ENCODE measurements at regions of chr1 and their contacts with region 1.

Region 1: DNA sequence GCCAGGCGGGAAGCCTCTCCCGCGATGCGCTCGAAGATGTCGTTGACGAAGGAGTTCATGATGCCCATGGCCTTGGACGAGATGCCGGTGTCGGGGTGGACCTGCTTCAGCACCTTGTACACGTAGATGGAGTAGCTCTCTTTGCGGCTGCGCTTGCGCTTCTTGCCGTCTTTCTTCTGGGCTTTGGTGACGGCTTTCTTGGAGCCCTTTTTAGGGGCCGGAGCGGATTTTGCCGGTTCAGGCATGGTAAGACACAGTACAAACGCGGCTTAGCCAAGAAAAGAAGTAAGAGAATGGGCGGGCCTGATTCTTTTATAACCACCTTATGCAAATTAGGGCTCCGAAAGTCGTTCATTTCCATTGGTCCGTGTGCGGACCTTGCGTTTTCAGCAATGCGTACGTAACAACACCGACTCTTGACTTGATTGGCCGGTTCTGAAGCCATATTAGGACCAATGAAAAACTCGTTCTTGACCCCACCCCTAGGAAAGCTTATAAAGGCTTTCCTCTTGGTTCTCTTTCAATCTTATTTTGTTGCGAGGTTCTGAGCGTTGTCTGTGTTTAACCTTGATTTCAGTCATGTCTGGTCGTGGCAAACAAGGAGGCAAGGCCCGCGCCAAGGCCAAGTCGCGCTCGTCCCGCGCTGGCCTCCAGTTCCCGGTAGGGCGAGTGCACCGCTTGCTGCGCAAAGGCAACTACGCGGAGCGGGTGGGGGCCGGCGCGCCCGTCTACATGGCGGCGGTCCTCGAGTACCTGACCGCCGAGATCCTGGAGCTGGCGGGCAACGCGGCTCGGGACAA is 12.8 kb upstream of the BOLA1 start:
- DNase-seq: peak; percentile 83 to 98 (median 89)
- ATAC-seq: peak; percentile 80
- H3K4me3 ChIP-seq: peak overlapping the region; percentile 64
- H3K27ac ChIP-seq: peak overlapping the region; percentile 98
- H3K4me1 ChIP-seq: peaks cover 8 to 27% of the 10 kb centered on the region in 2 experiments
- H3K27me3 ChIP-seq: no peaks in the 10 kb centered on the region
- CTCF ChIP-seq: no peak
- EP300 ChIP-seq: peak; percentile 27; the same call in 1 of the 2 replicates
- POLR2A ChIP-seq: peak; percentile 100
- RAD21 ChIP-seq: peak in 1 of 2 experiments; percentile 25; a peak in 1 of 4 replicates

Region 2: DNA sequence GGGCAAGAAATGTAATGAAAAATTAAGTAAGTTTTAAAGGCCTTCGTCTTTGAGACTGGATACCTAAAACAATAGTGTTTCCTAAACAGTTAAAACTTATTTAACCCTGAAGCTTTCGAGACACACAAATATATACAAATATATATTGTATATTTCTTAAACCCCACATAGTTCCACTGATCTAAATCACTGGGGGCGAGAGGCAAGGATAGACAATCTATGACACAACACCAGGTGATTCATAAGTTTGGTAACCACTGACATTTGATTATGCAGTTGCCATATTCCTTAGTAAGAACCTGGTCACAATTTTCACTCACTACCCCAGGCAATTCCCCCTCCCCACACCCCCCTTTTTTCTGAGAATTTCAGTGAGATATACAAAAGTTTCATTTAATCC is 42.5 kb before region 1 on chr1:
- CTCF ChIA-PET with region 1: no interaction called
- POLR2A ChIA-PET with region 1: interaction called, 39 read pairs
- in situ Hi-C with region 1: loop called (anchors 5 kb)
- intact Hi-C with region 1: no loop called
- DNase-seq: peak in 3 of 4 experiments; percentile 10 to 59 (median 11)
- ATAC-seq: no peak
- H3K4me3 ChIP-seq: peak overlapping the region; percentile 60
- H3K27ac ChIP-seq: peak overlapping the region; percentile 81
- H3K4me1 ChIP-seq: peaks cover 5 to 29% of the 10 kb centered on the region in 2 experiments; a peak in 4 of 5 replicates
- H3K27me3 ChIP-seq: no peaks in the 10 kb centered on the region
- CTCF ChIP-seq: no peak
- EP300 ChIP-seq: no peak
- POLR2A ChIP-seq: no peak
- RAD21 ChIP-seq: no peak

Region 3: DNA sequence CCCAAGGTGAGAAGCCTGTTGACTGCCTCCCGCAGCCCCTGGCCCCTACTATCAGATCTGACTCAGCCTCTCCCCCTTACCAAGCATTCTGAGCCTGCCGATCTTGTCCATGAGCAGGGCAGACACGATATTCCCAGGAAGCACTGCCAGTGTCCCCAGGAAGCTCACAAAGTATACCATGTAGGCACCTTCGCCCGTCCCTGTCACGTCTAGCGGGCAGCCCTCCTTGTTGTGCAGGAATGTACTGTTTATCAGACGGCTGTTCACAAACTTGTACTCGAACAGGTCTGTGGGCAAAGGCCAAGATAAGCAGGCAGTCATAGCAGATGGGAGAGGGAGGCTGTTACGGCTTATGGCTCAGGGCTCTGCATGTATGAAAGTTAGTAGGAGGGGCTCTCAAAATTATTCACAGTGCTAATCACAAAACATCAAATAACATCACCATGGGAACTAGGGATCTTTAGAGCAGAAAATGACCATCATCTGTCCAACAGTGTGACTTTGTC is 20.0 kb after region 1 on chr1:
- CTCF ChIA-PET with region 1: no interaction called
- POLR2A ChIA-PET with region 1: interaction called, 71 read pairs
- in situ Hi-C with region 1: no loop called
- intact Hi-C with region 1: no loop called
- DNase-seq: peak; percentile 65 to 79 (median 76)
- ATAC-seq: peak; percentile 82
- H3K4me3 ChIP-seq: peak overlapping the region; percentile 5; the same call in 1 of the 2 replicates
- H3K27ac ChIP-seq: peak overlapping the region; percentile 41; the same call in 1 of the 3 replicates
- H3K4me1 ChIP-seq: peaks cover 5 to 26% of the 10 kb centered on the region in 2 experiments; a peak in 4 of 5 replicates
- H3K27me3 ChIP-seq: no peaks in the 10 kb centered on the region
- CTCF ChIP-seq: no peak
- EP300 ChIP-seq: peak; percentile 15; the same call in 1 of the 2 replicates
- POLR2A ChIP-seq: no peak
- RAD21 ChIP-seq: no peak; a peak in 1 of 4 replicates

Region 4: DNA sequence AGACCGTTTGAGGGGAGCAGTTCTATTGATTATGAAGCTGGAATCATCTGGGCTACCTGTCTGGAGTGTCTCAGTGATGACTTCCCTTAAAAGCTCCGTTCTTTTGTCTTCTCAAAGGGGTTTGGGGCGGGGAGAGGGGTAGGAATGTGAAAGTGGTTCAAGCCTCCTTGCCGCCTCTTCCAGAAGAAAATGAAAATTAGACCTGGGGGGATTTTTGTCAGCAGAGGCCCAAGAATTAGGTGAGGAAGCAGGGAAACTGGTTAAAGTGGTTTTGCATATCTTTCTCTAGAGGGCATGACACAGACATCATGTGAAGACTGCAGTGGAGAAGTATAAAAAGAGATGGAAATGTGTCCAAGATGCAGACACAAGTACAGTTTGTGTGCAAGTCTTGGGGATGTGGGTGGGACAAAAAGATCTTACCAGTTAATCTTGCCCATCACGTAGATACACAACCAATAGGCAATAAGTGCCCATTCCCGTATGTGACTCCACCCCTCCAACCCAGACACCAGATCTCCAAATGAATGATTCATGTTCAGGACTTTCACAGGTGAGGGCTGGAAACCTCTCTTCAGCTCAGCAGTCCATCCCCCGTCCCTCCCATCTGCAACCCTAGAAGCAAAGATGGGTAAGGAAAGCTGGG is 50.6 kb after region 1 on chr1:
- CTCF ChIA-PET with region 1: interaction called, 4 read pairs
- POLR2A ChIA-PET with region 1: interaction called, 29 read pairs
- in situ Hi-C with region 1: no loop called
- intact Hi-C with region 1: loop called (anchors 1 kb)
- DNase-seq: no peak
- ATAC-seq: no peak
- H3K4me3 ChIP-seq: peak overlapping the region; percentile 2; the same call in 1 of the 2 replicates
- H3K27ac ChIP-seq: no peak overlapping the region
- H3K4me1 ChIP-seq: peaks cover 23 to 39% of the 10 kb centered on the region in 2 experiments
- H3K27me3 ChIP-seq: no peaks in the 10 kb centered on the region
- CTCF ChIP-seq: no peak
- EP300 ChIP-seq: no peak
- POLR2A ChIP-seq: no peak
- RAD21 ChIP-seq: no peak

Region 5: DNA sequence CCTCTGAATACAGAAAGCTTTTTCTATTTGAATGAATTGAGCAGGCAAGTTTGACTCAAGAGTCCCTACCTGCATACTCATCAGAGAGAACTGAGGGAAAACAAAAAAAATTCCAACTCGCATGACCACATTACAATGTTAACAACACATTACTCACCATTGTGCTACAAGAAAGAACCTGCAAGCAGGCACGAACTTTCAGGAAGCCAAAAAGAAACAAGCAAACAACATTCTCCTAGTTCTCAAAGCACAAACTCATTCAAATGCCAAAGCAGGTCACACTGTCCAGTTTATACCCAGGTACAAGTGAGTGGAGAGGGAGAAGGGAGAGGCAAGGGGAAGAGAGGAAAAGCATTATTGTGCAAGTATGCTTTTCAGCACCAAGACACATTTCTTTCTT is 109.4 kb after region 1 on chr1:
- CTCF ChIA-PET with region 1: no interaction called
- POLR2A ChIA-PET with region 1: no interaction called
- in situ Hi-C with region 1: no loop called
- intact Hi-C with region 1: no loop called
- DNase-seq: no peak
- ATAC-seq: no peak
- H3K4me3 ChIP-seq: no peak overlapping the region
- H3K27ac ChIP-seq: no peak overlapping the region
- H3K4me1 ChIP-seq: peaks cover 0 to under 1% of the 10 kb centered on the region in 2 experiments; a peak in 1 of 5 replicates
- H3K27me3 ChIP-seq: no peaks in the 10 kb centered on the region
- CTCF ChIP-seq: no peak
- EP300 ChIP-seq: no peak
- POLR2A ChIP-seq: no peak
- RAD21 ChIP-seq: no peak

Region 6: GRCh38 chr1:150053926-150054325 is 167.3 kb after region 1 on chr1:
- CTCF ChIA-PET with region 1: interaction called, 3 read pairs
- POLR2A ChIA-PET with region 1: interaction called, 8 read pairs
- in situ Hi-C with region 1: no loop called
- intact Hi-C with region 1: loop called (anchors 2 kb)
- DNase-seq: no peak
- ATAC-seq: no peak
- H3K4me3 ChIP-seq: no peak overlapping the region
- H3K27ac ChIP-seq: no peak overlapping the region
- H3K4me1 ChIP-seq: no peaks in the 10 kb centered on the region; a peak in 1 of 5 replicates
- H3K27me3 ChIP-seq: no peaks in the 10 kb centered on the region
- CTCF ChIP-seq: no peak
- EP300 ChIP-seq: no peak
- POLR2A ChIP-seq: no peak
- RAD21 ChIP-seq: no peak

Region 7: DNA sequence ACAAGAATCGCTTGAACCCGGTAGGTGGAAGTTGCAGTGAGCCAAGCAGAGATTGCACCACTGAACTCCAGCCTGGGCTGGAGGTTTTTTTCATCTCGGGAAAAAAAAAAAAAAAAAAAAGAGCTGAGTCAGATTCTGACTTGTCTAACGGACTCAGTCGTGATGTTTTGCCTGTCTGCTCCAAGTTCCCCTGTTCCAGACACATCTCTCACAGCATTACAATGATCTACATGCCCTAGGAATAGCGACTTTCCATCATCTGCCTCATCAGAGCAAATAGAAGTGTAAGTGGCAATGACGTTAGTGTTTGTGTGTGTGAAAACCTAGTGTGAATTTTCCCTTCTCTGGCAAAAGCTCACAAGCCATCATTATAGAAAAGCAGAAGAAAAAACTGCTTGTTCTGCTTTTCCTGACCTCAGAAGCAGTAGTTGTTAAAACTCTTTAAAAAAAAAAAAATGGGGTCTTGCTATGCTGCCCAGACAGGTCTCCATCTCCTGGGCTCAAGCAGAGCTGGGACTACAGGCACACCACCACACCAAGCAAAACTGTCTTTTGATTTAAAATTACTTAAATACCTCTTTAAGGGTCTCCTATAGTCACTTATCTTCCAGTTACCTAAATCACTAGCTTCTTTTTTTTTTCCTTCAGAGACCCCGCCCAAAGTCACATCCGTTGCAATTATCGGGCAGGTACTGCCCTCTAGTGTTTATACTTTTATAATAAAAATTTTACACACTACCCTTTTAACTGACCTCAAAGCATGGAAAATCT is 300.4 kb after region 1 on chr1:
- CTCF ChIA-PET with region 1: interaction called, 8 read pairs
- POLR2A ChIA-PET with region 1: interaction called, 27 read pairs
- in situ Hi-C with region 1: no loop called
- intact Hi-C with region 1: no loop called
- DNase-seq: peak; percentile 62 to 76 (median 64)
- ATAC-seq: peak; percentile 89
- H3K4me3 ChIP-seq: no peak overlapping the region
- H3K27ac ChIP-seq: peak overlapping the region; percentile 73; the same call in 2 of the 3 replicates
- H3K4me1 ChIP-seq: peaks cover 4 to 12% of the 10 kb centered on the region in 2 experiments; a peak in 4 of 5 replicates
- H3K27me3 ChIP-seq: no peaks in the 10 kb centered on the region
- CTCF ChIP-seq: peak; percentile 29 to 72 (median 51); a peak in 5 of 6 replicates
- EP300 ChIP-seq: peak; percentile 67
- POLR2A ChIP-seq: no peak
- RAD21 ChIP-seq: peak; percentile 73 to 75

Measured in K562 (cell line).